ENCODE measurements at regions of chr5 and their contacts with region 1.

Region 1: DNA sequence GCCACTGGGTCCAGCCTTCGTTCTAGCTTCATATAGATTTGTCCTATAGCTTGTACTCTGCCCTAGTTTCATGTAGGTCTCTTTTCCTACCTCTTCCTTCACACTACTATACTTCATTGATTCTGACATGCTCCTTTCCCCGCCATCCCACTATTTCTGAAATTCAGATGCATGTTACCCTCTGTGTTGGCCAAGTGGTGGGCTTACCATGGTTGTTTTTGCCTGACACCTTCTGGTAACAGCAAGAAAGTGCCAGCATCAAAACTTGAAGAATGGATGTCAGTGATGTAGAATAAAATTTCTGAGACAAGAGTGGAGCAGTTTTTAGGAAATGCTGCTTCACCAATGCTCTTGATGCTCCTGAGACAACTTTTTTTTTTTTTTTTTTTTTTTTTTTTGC is 19.5 kb upstream of the SERINC5 start:
- DNase-seq: peak; percentile 16
- H3K4me3 ChIP-seq: no peak overlapping the region
- H3K27ac ChIP-seq: no peak overlapping the region
- H3K4me1 ChIP-seq: no peaks in the 10 kb centered on the region
- H3K27me3 ChIP-seq: no peaks in the 10 kb centered on the region

Region 2: GRCh38 chr5:78953092-78953800 is 1322.1 kb before region 1 on chr5:
- in situ Hi-C with region 1: no loop called
- DNase-seq: peak; percentile 34
- H3K4me3 ChIP-seq: no peak overlapping the region
- H3K27ac ChIP-seq: no peak overlapping the region
- H3K4me1 ChIP-seq: peaks cover 7% of the 10 kb centered on the region; the same call in 1 of the 2 replicates
- H3K27me3 ChIP-seq: no peaks in the 10 kb centered on the region

Region 3: DNA sequence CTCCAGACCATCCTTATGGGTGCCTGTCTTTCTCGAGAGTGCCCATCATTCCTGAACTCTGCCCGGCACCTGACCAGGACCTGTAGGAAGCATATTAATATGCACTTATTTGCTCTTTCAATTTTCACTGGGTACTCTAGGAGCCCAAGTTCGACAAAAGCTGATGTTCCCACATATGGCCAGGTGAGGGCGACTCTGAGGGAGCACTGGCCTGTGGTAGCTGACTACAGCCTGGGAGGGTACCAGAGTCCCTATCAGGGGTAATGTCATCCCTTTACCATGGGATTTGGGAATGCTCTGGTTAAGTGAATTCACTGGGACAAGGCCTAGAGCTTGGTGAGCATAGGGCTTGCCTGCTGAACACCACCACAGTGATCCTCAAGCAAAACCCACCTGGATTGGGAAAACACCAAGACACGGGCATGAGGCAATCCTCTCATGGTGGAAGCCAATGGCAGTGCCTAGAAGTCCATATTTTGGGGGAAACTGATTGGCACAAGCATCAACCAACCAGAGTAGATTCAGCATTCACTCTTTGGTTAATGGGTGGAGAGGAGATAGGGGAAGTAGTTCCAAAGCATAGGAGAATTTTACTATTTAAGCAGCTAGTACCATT is 396.5 kb before region 1 on chr5:
- in situ Hi-C with region 1: loop called (anchors 25 kb)
- DNase-seq: peak; percentile 26
- H3K4me3 ChIP-seq: no peak overlapping the region
- H3K27ac ChIP-seq: no peak overlapping the region
- H3K4me1 ChIP-seq: peaks cover 7% of the 10 kb centered on the region; the same call in 1 of the 2 replicates
- H3K27me3 ChIP-seq: no peaks in the 10 kb centered on the region

Region 4: DNA sequence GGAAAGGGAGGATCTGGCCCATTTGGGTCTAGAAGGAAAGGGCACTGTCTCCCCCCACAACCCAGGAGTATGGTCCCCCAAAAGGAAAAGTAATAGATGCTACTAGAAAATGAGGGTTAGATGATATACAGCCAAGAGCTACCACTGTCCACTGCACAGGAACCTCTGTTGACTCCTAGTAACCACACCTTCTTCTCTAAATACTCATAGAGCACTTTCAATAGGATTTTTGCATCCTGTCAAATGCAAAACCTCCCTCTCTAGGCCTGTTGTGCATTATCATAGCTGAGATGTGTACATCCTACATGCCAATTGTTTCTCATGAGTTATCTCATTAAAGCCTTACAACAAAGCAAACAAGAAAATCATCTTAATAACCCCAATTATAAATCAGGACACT is 173.4 kb before region 1 on chr5:
- in situ Hi-C with region 1: no loop called
- DNase-seq: no peak
- H3K4me3 ChIP-seq: no peak overlapping the region
- H3K27ac ChIP-seq: no peak overlapping the region
- H3K4me1 ChIP-seq: no peaks in the 10 kb centered on the region
- H3K27me3 ChIP-seq: no peaks in the 10 kb centered on the region

Measured in GM23248 (cell line).